ENCODE measurements at regions of chr15 and their contacts with region 1.

Region 1: GRCh38 chr15:30962079-30962478 is 29.3 kb downstream of the MTMR10 start:
- DNase-seq: no peak
- ATAC-seq: no peak
- H3K4me3 Mint-ChIP-seq: no peak overlapping the region
- H3K27ac Mint-ChIP-seq: peak overlapping the region; percentile 11
- H3K4me1 Mint-ChIP-seq: peaks cover 17% of the 10 kb centered on the region
- H3K27me3 Mint-ChIP-seq: no peaks in the 10 kb centered on the region
- CTCF ChIP-seq: no peak

Region 2: DNA sequence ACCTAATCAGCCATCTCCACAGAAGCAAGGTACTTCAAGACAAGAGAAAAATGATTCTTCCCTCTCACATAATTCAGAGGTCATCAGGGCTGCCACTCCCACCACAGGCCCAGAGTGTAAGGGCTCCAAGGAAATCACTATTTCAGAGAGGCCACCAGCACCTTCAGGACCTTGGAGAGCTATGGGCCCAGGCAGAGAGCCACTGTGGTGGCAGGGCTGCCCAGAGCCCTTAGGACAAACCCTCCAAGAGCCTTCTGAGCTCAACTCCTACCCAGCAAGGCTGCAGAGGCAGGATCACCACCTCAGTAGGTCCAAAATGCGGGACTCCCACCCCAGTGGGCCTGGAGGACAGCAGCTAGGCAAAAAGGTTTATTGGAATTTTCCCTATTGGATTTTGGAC is 76.3 kb before region 1 on chr15:
- CTCF ChIA-PET with region 1: no interaction called
- POLR2A ChIA-PET with region 1: no interaction called
- intact Hi-C with region 1: no loop called
- DNase-seq: peak; percentile 10
- ATAC-seq: no peak
- H3K4me3 Mint-ChIP-seq: no peak overlapping the region
- H3K27ac Mint-ChIP-seq: no peak overlapping the region
- H3K4me1 Mint-ChIP-seq: no peaks in the 10 kb centered on the region
- H3K27me3 Mint-ChIP-seq: no peaks in the 10 kb centered on the region
- CTCF ChIP-seq: no peak

Region 3: DNA sequence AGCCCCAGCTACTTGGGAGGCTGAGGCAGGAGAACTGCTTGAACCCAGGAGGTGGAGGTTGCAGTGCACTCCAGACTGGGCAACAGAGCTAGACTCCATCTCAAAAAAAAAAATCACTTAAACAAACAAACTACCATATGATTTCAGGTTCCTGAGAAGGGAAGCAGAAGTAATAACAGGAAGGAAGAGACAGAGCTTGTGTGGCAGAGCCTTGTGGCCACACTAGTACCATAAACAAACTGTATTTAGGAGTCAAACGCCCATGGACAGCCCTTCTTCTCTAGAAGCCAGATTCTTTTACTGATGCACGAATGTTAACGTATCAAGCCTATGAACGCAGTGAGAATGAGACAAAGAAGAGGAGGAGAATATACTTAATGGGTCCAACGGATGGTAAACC is 17.4 kb after region 1 on chr15:
- CTCF ChIA-PET with region 1: interaction called, 11 read pairs
- POLR2A ChIA-PET with region 1: interaction called, 7 read pairs
- intact Hi-C with region 1: no loop called
- DNase-seq: no peak
- ATAC-seq: no peak
- H3K4me3 Mint-ChIP-seq: no peak overlapping the region
- H3K27ac Mint-ChIP-seq: no peak overlapping the region
- H3K4me1 Mint-ChIP-seq: peaks cover 37% of the 10 kb centered on the region
- H3K27me3 Mint-ChIP-seq: no peaks in the 10 kb centered on the region
- CTCF ChIP-seq: no peak

Region 4: GRCh38 chr15:30991255-30992072 is 29.4 kb after region 1 on chr15 and contains the start of gene MTMR10:
- CTCF ChIA-PET with region 1: interaction called, 3 read pairs
- POLR2A ChIA-PET with region 1: interaction called, 12 read pairs
- intact Hi-C with region 1: no loop called
- DNase-seq: peak; percentile 64
- ATAC-seq: peak; percentile 95
- H3K4me3 Mint-ChIP-seq: peak within 1 kb of the TSS; percentile 93
- H3K27ac Mint-ChIP-seq: peak within 1 kb of the TSS; percentile 84
- H3K4me1 Mint-ChIP-seq: peaks cover 18% of the 10 kb centered on the region
- H3K27me3 Mint-ChIP-seq: no peaks in the 10 kb centered on the region
- CTCF ChIP-seq: no peak
- total RNA-seq, gene MTMR10: 11.3 to 13.2 TPM